ENCODE measurements at regions of chr2 and their contacts with region 1.

Region 1: DNA sequence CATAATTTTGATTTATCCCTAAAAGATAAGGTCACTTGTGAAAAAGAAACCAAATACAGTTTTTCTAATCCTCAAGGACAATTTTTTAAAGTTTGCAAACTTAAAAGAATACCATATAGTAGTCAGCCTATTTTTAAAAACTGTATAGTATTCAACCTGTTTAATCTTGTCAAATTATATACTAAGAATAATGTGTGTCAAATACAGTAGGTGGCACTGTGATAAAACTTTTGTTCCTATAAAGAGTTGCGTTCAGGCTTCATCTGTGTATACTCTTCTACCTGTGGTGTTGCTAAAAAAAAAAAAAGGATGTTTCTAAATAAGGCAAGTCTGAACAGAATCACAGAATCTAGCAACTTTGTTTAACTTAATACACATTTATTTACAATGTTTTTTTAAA is 68.6 kb downstream of the CCDC138 start:
- DNase-seq: no peak
- H3K4me3 ChIP-seq: no peak overlapping the region
- H3K27ac ChIP-seq: no peak overlapping the region
- H3K27me3 ChIP-seq: no peaks in the 10 kb centered on the region
- CTCF ChIP-seq: peak in 50 of 56 donors; percentile 17 to 74 (median 38)

Region 2: DNA sequence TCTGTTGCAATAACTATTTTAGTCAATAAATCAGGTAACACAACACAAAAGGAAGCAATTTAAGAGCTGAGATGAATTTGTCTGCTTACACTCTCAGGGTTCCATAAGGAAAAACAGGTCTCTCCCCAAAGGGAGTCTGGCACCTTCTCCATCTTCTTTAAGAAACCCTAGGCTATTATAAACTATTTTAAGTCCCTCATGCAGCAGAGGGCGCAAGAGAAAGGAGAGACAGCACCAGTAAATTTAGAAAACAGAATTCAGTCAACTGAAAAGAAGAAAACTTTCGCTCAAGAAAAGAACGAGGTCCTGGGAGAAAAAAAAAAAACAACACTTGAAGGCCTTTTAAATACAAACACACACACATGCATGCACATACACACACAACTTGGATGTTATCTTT is 458.3 kb before region 1 on chr2:
- intact Hi-C with region 1: no loop called
- DNase-seq: no peak
- H3K4me3 ChIP-seq: no peak overlapping the region
- H3K27ac ChIP-seq: no peak overlapping the region
- H3K27me3 ChIP-seq: no peaks in the 10 kb centered on the region
- CTCF ChIP-seq: peak in 2 of 56 donors; percentile 13 to 22

Region 3: GRCh38 chr2:108916796-108917421 is 61.7 kb after region 1 on chr2:
- intact Hi-C with region 1: loop called in 1 of 2 experiments (anchors 5 kb)
- DNase-seq: peak in 2 of 10 donors; percentile 36 to 53
- H3K4me3 ChIP-seq: peak overlapping the region in 24 of 59 donors; percentile 3 to 50 (median 20)
- H3K27ac ChIP-seq: peak overlapping the region in 29 of 59 donors; percentile 3 to 82 (median 51)
- H3K27me3 ChIP-seq: no peaks in the 10 kb centered on the region
- CTCF ChIP-seq: peak in 1 of 56 donors; percentile 12

Region 4: DNA sequence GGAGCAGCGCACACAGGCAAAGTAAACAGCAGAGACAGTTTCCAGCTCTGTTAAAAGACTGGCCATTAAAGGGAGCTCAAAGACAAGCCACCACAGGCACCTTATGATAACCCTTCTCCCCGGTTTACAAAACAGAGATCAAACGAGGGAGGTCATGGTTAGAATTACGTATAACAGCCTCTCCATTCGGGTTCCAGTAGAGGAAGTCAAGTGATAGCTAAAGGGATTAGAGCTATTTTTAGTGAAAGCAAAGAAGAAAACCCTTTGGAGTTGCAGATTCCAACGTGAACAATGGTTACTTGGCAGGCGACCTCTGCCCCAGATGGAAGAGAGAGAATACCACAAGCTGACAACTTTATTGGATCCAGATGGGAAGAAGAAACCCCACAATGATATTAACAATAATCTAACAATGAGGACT is 165.0 kb after region 1 on chr2:
- intact Hi-C with region 1: no loop called
- DNase-seq: no peak
- H3K4me3 ChIP-seq: no peak overlapping the region
- H3K27ac ChIP-seq: no peak overlapping the region
- H3K27me3 ChIP-seq: peaks cover 0 to 18% (median 0%) of the 10 kb centered on the region in 45 donors
- CTCF ChIP-seq: no peak

Measured in dorsolateral prefrontal cortex (tissue), 120 donors.